HEK293 (cell line): ENCODE measurements at regions of chr1 and their contacts with region 1.

Region 1: GRCh38 chr1:178300352-178300699 is 196.4 kb downstream of the CLEC20A start:
- H3K4me3 ChIP-seq: no peak overlapping the region
- H3K27ac ChIP-seq: no peak overlapping the region
- H3K4me1 ChIP-seq: peaks cover 3% of the 10 kb centered on the region; the same call in 1 of the 2 replicates
- CTCF ChIP-seq: no peak

Region 2: GRCh38 chr1:178055779-178056471 is 244.4 kb before region 1 on chr1:
- CTCF ChIA-PET with region 1: no interaction called
- POLR2A ChIA-PET with region 1: no interaction called
- H3K4me3 ChIP-seq: no peak overlapping the region
- H3K27ac ChIP-seq: no peak overlapping the region
- H3K4me1 ChIP-seq: no peaks in the 10 kb centered on the region
- CTCF ChIP-seq: no peak

Region 3: GRCh38 chr1:178282949-178283367 is 17.4 kb before region 1 on chr1:
- CTCF ChIA-PET with region 1: interaction called, 14 read pairs
- POLR2A ChIA-PET with region 1: no interaction called
- H3K4me3 ChIP-seq: no peak overlapping the region
- H3K27ac ChIP-seq: no peak overlapping the region
- H3K4me1 ChIP-seq: no peaks in the 10 kb centered on the region
- CTCF ChIP-seq: no peak

Region 4: DNA sequence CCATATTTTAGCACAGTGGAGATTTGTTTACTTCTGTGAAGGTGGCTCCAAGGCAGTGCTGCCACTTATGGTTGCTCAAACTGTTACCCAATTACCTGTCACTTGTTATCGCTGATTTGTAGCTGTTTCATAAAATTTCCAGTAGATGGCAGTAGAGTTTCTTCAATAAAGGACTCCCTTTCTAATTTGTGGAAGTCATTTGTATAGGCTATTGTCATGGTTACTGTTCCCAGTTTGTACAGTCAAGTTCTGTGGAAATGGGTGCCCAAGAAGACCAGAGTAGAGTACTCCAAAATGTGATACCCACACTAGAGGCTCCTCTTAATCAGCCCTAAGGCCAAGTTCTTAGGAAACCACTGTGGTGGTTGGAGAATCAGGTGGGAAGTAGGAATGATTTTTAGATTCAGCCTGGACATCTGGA is 10.4 kb after region 1 on chr1:
- CTCF ChIA-PET with region 1: interaction called, 15 read pairs
- POLR2A ChIA-PET with region 1: no interaction called
- H3K4me3 ChIP-seq: no peak overlapping the region
- H3K27ac ChIP-seq: no peak overlapping the region
- H3K4me1 ChIP-seq: no peaks in the 10 kb centered on the region
- CTCF ChIP-seq: peak; percentile 39; the same call in 1 of the 2 replicates

Region 5: DNA sequence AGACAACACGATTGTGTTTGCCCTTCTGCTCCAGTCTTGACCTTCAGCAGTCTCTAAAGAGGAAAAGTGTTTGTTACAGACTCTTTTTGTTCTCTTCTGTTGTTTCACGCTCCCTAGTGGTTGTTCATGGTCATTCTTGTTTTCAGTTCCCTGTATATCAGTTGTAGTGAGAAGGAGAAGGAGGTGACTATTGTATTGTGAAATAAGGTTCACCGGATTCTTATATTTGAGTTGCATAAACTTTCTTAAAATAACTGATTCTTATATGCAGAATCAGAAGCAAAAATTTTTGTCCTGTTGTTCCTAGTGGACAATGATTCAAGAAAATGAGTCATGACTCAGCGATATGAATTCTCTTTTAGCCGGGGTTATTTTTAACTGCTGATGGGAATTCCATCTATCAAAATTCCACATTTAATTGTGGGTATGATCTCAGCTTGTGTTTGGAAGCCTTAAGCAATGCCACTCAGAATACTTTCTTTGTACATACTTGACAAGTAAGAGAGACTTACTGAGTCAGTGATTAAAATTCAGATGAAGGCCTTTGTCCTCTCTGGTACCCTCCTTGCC is 44.3 kb after region 1 on chr1:
- CTCF ChIA-PET with region 1: interaction called, 14 read pairs
- POLR2A ChIA-PET with region 1: interaction called, 3 read pairs
- H3K4me3 ChIP-seq: no peak overlapping the region
- H3K27ac ChIP-seq: no peak overlapping the region
- H3K4me1 ChIP-seq: peaks cover 9% of the 10 kb centered on the region; the same call in 1 of the 2 replicates
- CTCF ChIP-seq: no peak

Region 6: DNA sequence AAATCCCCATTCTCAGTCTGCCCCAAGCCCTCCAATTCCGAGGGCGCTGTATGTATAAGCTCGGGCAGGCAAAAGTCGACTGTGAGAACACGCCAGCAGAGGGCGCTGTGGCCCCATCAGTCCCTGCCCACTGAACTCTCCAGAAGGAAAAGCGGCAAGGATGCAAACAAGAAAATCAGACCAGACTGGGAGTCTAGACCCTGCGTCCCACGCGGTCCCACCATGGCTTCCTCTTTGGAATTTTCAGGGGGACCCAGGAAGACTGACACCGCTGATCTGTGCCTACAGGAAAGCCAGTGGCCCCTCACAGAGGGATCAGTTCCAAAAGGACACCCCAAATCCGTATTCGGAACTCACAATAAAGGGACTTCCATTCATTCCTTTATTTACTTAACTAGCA is 232.1 kb after region 1 on chr1:
- CTCF ChIA-PET with region 1: interaction called, 19 read pairs
- POLR2A ChIA-PET with region 1: no interaction called
- H3K4me3 ChIP-seq: no peak overlapping the region
- H3K27ac ChIP-seq: no peak overlapping the region
- H3K4me1 ChIP-seq: no peaks in the 10 kb centered on the region; the same call in 1 of the 2 replicates
- CTCF ChIP-seq: peak; percentile 77

Region 7: GRCh38 chr1:178566187-178566586 is 265.9 kb after region 1 on chr1:
- CTCF ChIA-PET with region 1: no interaction called
- POLR2A ChIA-PET with region 1: no interaction called
- H3K4me3 ChIP-seq: no peak overlapping the region
- H3K27ac ChIP-seq: no peak overlapping the region
- H3K4me1 ChIP-seq: no peaks in the 10 kb centered on the region
- CTCF ChIP-seq: no peak